Heart left ventricle (tissue), 16 donors: ENCODE measurements at regions of chr14 and their contacts with region 1.

Region 1: DNA sequence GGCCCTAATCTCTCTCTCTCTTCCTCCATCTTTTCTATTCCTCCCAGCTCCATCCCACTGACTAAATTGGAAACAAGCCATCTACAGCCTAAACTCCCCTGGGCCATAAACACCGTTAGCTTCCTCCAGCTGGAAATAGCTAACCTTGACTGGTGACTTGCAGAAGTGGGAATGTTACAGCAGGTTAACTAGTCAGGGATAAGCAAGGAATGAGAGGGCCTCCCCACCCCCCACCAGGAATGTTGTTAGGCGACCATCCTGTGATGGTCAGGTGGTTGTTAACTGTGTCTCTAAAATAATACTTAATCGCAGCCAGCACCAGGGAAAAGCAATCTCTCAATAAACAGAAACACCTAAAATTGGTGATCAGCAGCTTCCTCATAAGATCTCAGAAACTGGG is 40.8 kb downstream of the MIS18BP1 start:
- DNase-seq: no peak
- ATAC-seq: peak in 1 of 4 donors; percentile 15
- H3K4me3 ChIP-seq: no peak overlapping the region
- H3K27ac ChIP-seq: no peak overlapping the region
- H3K4me1 ChIP-seq: peaks cover 0 to 12% (median 0%) of the 10 kb centered on the region in 12 donors
- H3K27me3 ChIP-seq: no peaks in the 10 kb centered on the region
- CTCF ChIP-seq: no peak
- POLR2A ChIP-seq: no peak

Region 2: GRCh38 chr14:45227566-45227965 is 15.3 kb after region 1 on chr14:
- intact Hi-C with region 1: loop called in 1 of 10 experiments (anchors 1 kb)
- DNase-seq: no peak
- ATAC-seq: no peak
- H3K4me3 ChIP-seq: no peak overlapping the region
- H3K27ac ChIP-seq: no peak overlapping the region
- H3K4me1 ChIP-seq: no peaks in the 10 kb centered on the region
- H3K27me3 ChIP-seq: no peaks in the 10 kb centered on the region
- CTCF ChIP-seq: no peak
- POLR2A ChIP-seq: no peak